Calu3 (cell line): ENCODE measurements at regions of chr2 and their contacts with region 1.

Region 1: DNA sequence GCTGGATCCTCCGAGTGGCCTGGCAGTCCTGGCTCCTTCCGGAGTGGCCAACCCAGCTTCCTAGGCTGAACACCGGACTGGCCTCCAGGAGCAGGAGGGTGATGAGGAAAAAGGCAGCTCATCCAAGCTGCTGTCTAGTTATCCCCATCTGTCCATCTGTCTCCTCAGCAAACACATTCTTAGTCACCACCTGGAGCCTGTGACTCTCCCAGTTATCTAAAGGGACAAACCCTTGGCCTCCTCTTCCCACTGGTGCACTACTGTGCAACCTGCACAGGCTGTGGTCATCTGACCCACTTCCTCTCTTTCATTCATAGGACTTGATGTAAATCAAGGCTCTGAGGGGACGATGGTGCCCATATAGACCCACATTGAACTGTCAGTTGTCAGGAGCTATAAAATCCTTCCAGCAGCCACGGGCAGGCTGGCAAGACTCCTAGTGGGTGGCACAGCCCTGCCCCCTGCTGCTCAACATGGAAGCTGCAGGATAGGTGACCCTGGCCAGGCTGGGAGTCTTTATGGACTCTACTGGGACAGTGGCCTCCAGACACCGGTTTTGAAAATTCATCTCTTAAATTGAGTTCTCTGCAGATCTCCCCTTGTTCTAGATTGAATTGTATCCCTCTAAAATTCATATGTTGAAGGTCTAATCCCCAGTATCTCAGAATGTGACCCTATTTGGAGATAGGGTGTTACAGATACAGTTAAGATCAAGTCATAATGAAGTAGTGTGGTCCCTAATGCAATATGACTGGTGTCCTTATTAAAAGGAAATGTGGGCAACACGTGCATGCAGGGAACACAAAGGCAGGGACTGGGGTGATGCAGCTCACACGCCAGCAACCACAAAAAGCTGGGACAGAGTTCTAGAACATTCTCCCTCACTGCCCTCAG is 29.3 kb upstream of the DUSP2 start:
- DNase-seq: peak; percentile 85
- H3K4me3 Mint-ChIP-seq: no peak overlapping the region
- H3K27ac Mint-ChIP-seq: no peak overlapping the region
- H3K4me1 Mint-ChIP-seq: no peaks in the 10 kb centered on the region
- H3K27me3 Mint-ChIP-seq: peaks cover 14% of the 10 kb centered on the region
- CTCF ChIP-seq: peak; percentile 85

Region 2: DNA sequence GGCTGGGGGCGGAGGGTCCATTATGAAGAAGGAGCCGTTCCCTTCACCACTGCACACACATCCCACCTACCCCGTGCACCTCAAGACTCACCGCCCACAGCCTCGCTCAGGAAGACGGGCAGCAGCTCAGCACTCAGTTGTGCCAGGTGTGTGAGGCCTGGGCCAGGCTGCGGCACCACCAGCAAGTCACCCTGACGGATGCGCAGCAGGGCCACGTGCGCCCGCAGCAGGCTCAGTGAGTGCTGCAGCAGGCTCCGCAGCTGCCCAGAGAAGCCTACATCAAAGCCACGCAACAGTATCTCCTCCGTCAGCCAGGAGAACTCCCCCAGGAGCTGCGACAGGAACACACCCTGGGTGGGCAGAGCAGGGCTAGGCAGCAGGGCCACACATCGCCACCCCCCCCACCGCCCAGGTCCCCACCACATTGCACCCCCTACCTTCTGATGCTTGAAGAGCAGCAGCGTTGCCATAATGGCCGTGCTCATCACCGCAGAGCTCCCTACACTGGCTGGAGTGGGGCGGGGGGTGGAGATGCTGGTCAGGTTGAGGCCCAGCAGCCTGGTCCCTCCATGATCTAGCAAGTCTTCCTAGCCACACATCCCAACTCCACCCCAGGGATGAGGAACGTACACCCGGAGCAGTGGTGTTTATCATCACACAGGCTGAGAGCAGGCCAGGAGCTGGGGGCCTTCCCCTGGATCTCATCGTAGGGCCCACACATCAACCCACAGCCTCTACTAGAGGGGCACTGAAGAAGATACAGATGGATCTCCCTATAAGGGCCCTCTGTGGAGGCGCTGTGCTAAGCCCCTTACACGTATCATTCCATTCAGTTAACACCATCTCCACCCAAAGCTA is 149.9 kb before region 1 on chr2:
- CTCF ChIA-PET with region 1: interaction called, 14 read pairs
- intact Hi-C with region 1: loop called (anchors 10 kb)
- DNase-seq: no peak
- H3K4me3 Mint-ChIP-seq: no peak overlapping the region
- H3K27ac Mint-ChIP-seq: no peak overlapping the region
- H3K4me1 Mint-ChIP-seq: no peaks in the 10 kb centered on the region
- H3K27me3 Mint-ChIP-seq: no peaks in the 10 kb centered on the region
- CTCF ChIP-seq: no peak

Region 3: DNA sequence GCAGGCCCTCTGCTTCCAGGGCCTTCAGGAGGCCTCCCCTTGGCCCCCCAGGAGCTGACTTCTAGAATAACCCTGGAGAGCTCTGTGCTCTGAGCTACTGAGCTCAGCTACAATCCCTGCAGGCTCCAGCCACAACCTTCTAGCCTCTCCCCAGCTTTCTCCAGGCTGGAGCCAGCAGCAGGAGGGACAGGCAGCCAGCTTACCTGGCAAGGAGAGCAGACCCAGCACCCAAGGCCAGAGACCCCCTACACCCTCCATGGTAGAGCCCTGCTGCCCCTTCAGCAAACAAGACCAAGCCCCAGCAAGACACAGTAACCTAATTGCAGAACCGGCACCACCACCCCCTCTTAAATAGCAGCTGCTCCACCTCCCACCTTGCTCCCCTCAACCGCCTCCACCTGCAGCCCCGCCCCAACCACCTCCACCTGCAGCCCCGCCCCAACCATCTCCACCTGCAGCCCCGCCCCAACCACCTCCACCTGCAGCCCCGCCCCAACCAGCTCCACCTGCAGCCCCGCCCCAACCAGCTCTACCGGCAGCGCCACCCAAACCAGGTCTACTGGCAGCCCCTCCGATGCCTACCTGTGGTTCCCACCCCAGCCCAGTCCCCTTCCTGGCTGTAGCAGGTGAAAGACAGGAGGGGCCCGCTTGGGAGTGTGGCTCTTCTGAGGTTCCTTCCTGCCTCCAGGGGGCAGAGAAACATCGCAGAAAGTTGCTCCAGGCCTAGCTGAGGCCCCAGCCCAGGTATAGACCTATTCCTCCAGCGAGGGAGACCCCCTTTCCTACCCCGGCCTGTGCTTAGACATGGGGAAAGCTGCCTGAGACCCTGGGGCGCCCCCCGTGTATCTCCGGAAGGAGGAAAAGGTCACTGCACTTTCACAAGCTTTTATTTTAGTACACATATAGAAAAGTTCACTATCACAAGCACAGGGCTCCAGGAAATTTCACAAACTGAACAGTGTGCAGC is 36.0 kb before region 1 on chr2 and contains the start of gene ASTL:
- CTCF ChIA-PET with region 1: interaction called, 42 read pairs
- intact Hi-C with region 1: loop called (anchors 2 kb)
- DNase-seq: peak; percentile 75
- H3K4me3 Mint-ChIP-seq: peak within 1 kb of the TSS; percentile 30
- H3K27ac Mint-ChIP-seq: no peak within 1 kb of the TSS
- H3K4me1 Mint-ChIP-seq: no peaks in the 10 kb centered on the region
- H3K27me3 Mint-ChIP-seq: peaks cover 42% of the 10 kb centered on the region
- CTCF ChIP-seq: peak; percentile 60
- total RNA-seq, gene ASTL: not detected in 2 replicates